ENCODE measurements at regions of chr13 and their contacts with region 1.

Region 1: GRCh38 chr13:33276570-33276969 is 9.0 kb downstream of the STARD13 start:
- DNase-seq: no peak
- ATAC-seq: peak in 1 of 4 donors; percentile 47
- H3K4me3 ChIP-seq: no peak overlapping the region
- H3K27ac ChIP-seq: peak overlapping the region; percentile 18 to 91 (median 70)
- H3K4me1 ChIP-seq: peaks cover 15 to 97% (median 68%) of the 10 kb centered on the region in 12 donors
- H3K27me3 ChIP-seq: no peaks in the 10 kb centered on the region
- CTCF ChIP-seq: no peak
- POLR2A ChIP-seq: no peak

Region 2: DNA sequence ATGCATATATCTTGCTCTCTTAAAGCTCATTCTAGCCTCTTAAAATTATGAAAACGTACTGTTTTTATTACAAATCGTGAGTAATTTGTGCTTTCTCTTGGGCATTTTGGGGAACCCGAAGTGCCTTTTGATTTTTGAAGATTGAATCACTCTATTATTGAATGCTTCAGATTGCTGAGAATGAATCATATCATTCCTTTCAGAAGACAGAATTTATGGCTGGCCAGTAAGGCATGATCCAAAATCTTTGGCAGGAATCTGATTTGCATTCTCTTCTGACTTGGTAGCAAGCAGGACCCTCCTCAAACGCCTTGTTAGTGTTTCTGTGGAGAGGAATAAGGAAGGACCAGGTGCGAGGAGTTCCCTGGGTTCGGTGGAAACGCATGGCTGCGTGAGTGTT is 40.5 kb before region 1 on chr13:
- intact Hi-C with region 1: loop called in 4 of 10 experiments (anchors 2 to 10 kb)
- DNase-seq: no peak
- ATAC-seq: peak in 1 of 4 donors; percentile 50
- H3K4me3 ChIP-seq: no peak overlapping the region
- H3K27ac ChIP-seq: peak overlapping the region in 10 of 12 donors; percentile 4 to 65 (median 37)
- H3K4me1 ChIP-seq: peaks cover 0 to 54% (median 31%) of the 10 kb centered on the region in 12 donors
- H3K27me3 ChIP-seq: no peaks in the 10 kb centered on the region
- CTCF ChIP-seq: no peak
- POLR2A ChIP-seq: no peak